Left lung (tissue), 14 donors: ENCODE measurements at regions of chr6 and their contacts with region 1.

Region 1: GRCh38 chr6:125099211-125100073 is 54.1 kb upstream of the TPD52L1 start:
- DNase-seq: peak; percentile 36 to 91 (median 56)
- ATAC-seq: peak; percentile 96
- H3K4me3 ChIP-seq: peak overlapping the region; percentile 29 to 44
- H3K27ac ChIP-seq: no peak overlapping the region
- H3K4me1 ChIP-seq: peaks cover 0 to 8% of the 10 kb centered on the region in 2 donors
- H3K27me3 ChIP-seq: peaks cover 0 to 5% of the 10 kb centered on the region in 2 donors
- CTCF ChIP-seq: no peak

Region 2: GRCh38 chr6:124961777-124962611 is 137.4 kb before region 1 on chr6 and contains the start of gene RNF217:
- intact Hi-C with region 1: loop called in 1 of 2 experiments (anchors 10 kb)
- DNase-seq: peak; percentile 63 to 88 (median 75)
- ATAC-seq: peak; percentile 72
- H3K4me3 ChIP-seq: peak within 1 kb of the TSS; percentile 78 to 87
- H3K27ac ChIP-seq: peak within 1 kb of the TSS; percentile 90 to 95
- H3K4me1 ChIP-seq: peaks cover 0 to 37% of the 10 kb centered on the region in 2 donors
- H3K27me3 ChIP-seq: no peaks in the 10 kb centered on the region
- CTCF ChIP-seq: no peak
- polyA plus RNA-seq, gene RNF217: 21.8 to 31.4 (median 23.8) TPM